Transverse colon (tissue), 4 donors: ENCODE measurements at regions of chr2 and their contacts with region 1.

Region 1: GRCh38 chr2:211745295-211746097 is 793.1 kb downstream of the ERBB4 start:
- DNase-seq: peak; percentile 29
- H3K4me3 ChIP-seq: no peak overlapping the region
- H3K27ac ChIP-seq: no peak overlapping the region
- H3K4me1 ChIP-seq: no peaks in the 10 kb centered on the region
- H3K27me3 ChIP-seq: no peaks in the 10 kb centered on the region
- CTCF ChIP-seq: peak; percentile 53 to 77 (median 75)
- EP300 ChIP-seq: no peak
- POLR2A ChIP-seq: no peak

Region 2: DNA sequence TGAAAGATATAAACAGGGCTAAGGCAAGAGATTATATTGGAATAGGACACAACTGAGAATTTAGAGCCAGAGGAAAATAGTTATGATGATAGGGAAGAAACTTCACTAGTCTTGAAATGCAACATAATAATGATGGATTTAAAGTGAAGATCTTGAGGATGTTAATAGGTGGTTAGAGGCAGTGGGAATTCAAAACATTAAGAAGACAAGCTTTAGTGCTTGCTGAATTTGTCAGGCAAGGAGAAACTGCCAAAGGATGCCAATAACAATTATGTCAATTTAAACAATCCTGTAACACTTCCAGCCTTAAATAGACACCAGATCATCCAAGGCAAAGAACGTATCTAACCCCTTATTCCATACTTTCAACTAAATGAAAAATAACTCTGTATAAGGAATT is 463.0 kb after region 1 on chr2:
- in situ Hi-C with region 1: no loop called
- intact Hi-C with region 1: no loop called
- DNase-seq: no peak
- H3K4me3 ChIP-seq: no peak overlapping the region
- H3K27ac ChIP-seq: no peak overlapping the region
- H3K4me1 ChIP-seq: no peaks in the 10 kb centered on the region
- H3K27me3 ChIP-seq: no peaks in the 10 kb centered on the region
- CTCF ChIP-seq: no peak
- EP300 ChIP-seq: no peak
- POLR2A ChIP-seq: no peak

Region 3: DNA sequence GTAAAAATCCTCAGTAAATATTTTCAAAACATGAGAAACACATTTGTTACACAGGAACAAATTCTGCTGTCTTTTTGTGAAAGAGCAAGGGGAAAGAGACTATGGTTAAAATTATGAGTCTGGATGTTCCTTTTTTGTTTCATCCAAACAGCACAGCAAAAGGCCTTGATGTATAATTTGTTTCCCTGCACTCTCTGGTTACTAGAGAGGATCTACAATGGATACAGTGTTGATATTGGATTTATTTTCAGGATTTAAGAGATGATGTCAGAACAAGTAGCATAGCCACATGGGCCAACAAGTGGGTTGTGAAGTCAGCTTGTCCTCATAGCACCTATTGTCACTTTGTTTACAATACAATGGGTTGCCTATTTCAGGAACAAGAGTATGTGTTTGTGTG is 804.4 kb after region 1 on chr2:
- in situ Hi-C with region 1: no loop called
- intact Hi-C with region 1: loop called (anchors 10 kb)
- DNase-seq: no peak
- H3K4me3 ChIP-seq: no peak overlapping the region
- H3K27ac ChIP-seq: no peak overlapping the region
- H3K4me1 ChIP-seq: no peaks in the 10 kb centered on the region
- H3K27me3 ChIP-seq: no peaks in the 10 kb centered on the region
- CTCF ChIP-seq: no peak
- EP300 ChIP-seq: no peak
- POLR2A ChIP-seq: no peak